GM12878 (cell line): ENCODE measurements at regions of chr19 and their contacts with region 1.

Region 1: DNA sequence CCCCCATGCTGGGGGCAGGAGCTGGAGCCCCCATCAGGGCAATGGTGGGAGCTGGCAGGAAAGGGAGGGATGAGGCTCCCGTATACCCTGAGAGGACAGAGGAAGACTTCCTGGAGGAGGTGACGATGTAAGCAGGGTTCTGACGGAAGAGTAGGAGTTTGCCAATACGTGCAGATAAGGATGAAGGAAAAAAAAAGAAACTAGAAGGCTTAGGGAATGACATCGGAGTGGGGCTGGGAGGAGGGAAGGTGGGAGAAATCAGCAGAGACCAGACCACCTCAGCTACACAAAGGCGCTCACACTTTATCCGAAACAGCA is 32.3 kb downstream of the ARHGEF18 start:
- DNase-seq: no peak
- ATAC-seq: no peak
- H3K4me3 ChIP-seq: no peak overlapping the region
- H3K27ac ChIP-seq: no peak overlapping the region
- H3K4me1 ChIP-seq: 0 out of 2 replicates have a peak, but pooled peaks cover under 1% of the 10 kb centered on the region
- H3K27me3 ChIP-seq: no peaks in the 10 kb centered on the region
- CTCF ChIP-seq: no peak
- EP300 ChIP-seq: no peak
- POLR2A ChIP-seq: no peak
- RAD21 ChIP-seq: no peak

Region 2: GRCh38 chr19:7348587-7349230 is 32.3 kb before region 1 on chr19 and contains the start of gene ARHGEF18:
- CTCF ChIA-PET with region 1: interaction called, 60 read pairs
- POLR2A ChIA-PET with region 1: interaction called, 6 read pairs
- RAD21 ChIA-PET with region 1: interaction called, 20 read pairs
- SMC1A ChIA-PET with region 1: interaction called, 11 read pairs
- in situ Hi-C with region 1: no loop called
- intact Hi-C with region 1: loop called (anchors 5 kb)
- DNase-seq: peak; percentile 59
- ATAC-seq: peak; percentile 60
- H3K4me3 ChIP-seq: peak within 1 kb of the TSS; percentile 43; the same call in 1 of the 2 replicates
- H3K27ac ChIP-seq: peak within 1 kb of the TSS; percentile 77
- H3K4me1 ChIP-seq: peaks cover 58% of the 10 kb centered on the region
- H3K27me3 ChIP-seq: no peaks in the 10 kb centered on the region
- CTCF ChIP-seq: no peak
- EP300 ChIP-seq: peak in 1 of 2 experiments; percentile 36; a peak in 1 of 4 replicates
- POLR2A ChIP-seq: peak; percentile 72; the same call in 1 of the 2 replicates
- RAD21 ChIP-seq: no peak
- polyA plus RNA-seq, gene ARHGEF18: 0.31 to 0.57 TPM

Region 3: DNA sequence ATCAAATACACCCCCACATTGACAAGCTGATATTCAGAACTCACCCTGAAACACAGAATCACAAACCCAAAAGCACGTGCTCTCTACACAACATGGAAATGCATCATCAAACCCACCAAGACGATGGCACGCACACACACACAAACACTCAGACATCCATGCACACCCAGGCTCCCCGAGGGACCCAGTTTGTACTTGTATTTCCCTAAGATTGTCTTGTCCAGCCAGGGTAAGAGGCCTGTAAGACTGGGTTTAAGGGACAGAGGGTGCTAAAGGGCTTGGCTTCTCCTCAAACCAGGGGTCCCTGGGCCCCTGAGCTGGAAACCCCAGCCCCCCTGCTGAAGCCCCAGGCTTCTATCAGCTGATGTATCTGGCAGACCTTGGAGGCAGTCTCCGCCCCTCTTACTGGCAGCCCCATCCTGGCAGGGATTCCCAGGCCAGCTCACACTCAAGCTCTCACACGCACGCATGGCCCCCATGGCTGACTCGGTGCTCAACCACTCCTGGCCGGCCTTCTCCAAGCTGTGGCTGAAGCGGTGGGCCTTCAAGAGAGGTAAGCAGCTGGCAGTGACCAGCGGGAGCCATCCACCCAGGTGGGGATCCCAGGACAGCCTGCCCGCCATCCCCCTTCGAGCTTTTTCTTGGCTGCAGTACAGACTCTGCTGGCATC is 25.7 kb before region 1 on chr19:
- CTCF ChIA-PET with region 1: interaction called, 60 read pairs
- POLR2A ChIA-PET with region 1: interaction called, 6 read pairs
- RAD21 ChIA-PET with region 1: interaction called, 20 read pairs
- SMC1A ChIA-PET with region 1: interaction called, 11 read pairs
- in situ Hi-C with region 1: no loop called
- intact Hi-C with region 1: loop called (anchors 2 kb)
- DNase-seq: no peak
- ATAC-seq: peak; percentile 10; the same call in 2 of the 3 replicates
- H3K4me3 ChIP-seq: no peak overlapping the region
- H3K27ac ChIP-seq: no peak overlapping the region
- H3K4me1 ChIP-seq: peaks cover 11% of the 10 kb centered on the region
- H3K27me3 ChIP-seq: no peaks in the 10 kb centered on the region
- CTCF ChIP-seq: no peak
- EP300 ChIP-seq: no peak
- POLR2A ChIP-seq: no peak
- RAD21 ChIP-seq: no peak

Region 4: GRCh38 chr19:7366701-7367420 is 14.2 kb before region 1 on chr19:
- CTCF ChIA-PET with region 1: interaction called, 63 read pairs
- POLR2A ChIA-PET with region 1: no interaction called
- RAD21 ChIA-PET with region 1: interaction called, 8 read pairs
- SMC1A ChIA-PET with region 1: interaction called, 14 read pairs
- in situ Hi-C with region 1: no loop called
- intact Hi-C with region 1: no loop called
- DNase-seq: no peak
- ATAC-seq: peak; percentile 90
- H3K4me3 ChIP-seq: no peak overlapping the region
- H3K27ac ChIP-seq: no peak overlapping the region
- H3K4me1 ChIP-seq: no peaks in the 10 kb centered on the region
- H3K27me3 ChIP-seq: no peaks in the 10 kb centered on the region
- CTCF ChIP-seq: peak; percentile 65 to 69 (median 66)
- EP300 ChIP-seq: no peak
- POLR2A ChIP-seq: no peak
- RAD21 ChIP-seq: peak; percentile 72

Region 5: DNA sequence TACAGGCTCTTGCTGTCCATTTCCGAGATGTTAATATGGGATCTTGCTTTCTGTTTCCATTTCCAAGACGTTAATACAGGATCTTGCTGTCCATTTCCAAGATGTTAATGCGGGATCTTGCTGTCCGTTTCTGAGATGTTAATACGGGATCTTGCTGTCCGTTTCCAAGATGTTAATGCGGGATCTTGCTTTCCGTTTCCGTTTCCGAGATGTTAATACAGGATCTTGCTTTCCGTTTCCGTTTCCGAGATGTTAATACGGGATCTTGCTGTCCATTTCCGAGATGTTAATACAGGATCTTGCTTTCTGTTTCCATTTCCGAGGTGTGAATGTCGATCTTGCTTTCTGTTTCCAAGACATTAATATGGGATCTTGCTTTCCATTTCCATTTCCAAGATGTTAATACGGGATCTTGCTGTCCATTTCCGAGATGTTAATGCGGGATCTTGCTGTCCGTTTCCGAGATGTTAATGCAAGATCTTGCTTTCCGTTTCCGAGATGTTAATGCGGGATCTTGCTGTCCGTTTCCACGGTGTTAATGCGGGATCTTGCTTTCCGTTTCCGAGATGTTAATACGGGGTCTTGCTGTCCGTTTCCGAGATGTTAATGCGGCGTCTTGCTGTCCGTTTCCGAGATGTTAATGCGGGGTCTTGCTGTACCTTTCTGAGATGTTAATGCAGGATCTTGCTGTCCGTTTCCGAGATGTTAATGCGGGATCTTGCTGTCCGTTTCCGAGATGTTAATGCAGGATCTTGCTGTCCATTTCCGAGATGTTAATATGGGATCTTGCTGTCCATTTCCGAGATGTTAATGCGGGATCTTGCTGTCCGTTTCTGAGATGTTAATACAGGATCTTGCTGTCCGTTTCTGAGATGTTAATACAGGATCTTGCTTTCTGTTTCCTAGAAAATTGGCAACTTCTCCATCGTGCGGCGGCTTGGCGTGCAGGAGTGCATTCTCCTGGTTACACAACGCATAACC is 69.5 kb after region 1 on chr19:
- CTCF ChIA-PET with region 1: no interaction called
- POLR2A ChIA-PET with region 1: no interaction called
- RAD21 ChIA-PET with region 1: no interaction called
- SMC1A ChIA-PET with region 1: no interaction called
- in situ Hi-C with region 1: no loop called
- intact Hi-C with region 1: no loop called
- DNase-seq: peak; percentile 49
- ATAC-seq: no peak
- H3K4me3 ChIP-seq: no peak overlapping the region
- H3K27ac ChIP-seq: no peak overlapping the region
- H3K4me1 ChIP-seq: no peaks in the 10 kb centered on the region
- H3K27me3 ChIP-seq: no peaks in the 10 kb centered on the region
- CTCF ChIP-seq: no peak
- EP300 ChIP-seq: no peak
- POLR2A ChIP-seq: no peak
- RAD21 ChIP-seq: no peak